T-cell (primary cell): ENCODE measurements at regions of chr2 and their contacts with region 1.

Region 1: DNA sequence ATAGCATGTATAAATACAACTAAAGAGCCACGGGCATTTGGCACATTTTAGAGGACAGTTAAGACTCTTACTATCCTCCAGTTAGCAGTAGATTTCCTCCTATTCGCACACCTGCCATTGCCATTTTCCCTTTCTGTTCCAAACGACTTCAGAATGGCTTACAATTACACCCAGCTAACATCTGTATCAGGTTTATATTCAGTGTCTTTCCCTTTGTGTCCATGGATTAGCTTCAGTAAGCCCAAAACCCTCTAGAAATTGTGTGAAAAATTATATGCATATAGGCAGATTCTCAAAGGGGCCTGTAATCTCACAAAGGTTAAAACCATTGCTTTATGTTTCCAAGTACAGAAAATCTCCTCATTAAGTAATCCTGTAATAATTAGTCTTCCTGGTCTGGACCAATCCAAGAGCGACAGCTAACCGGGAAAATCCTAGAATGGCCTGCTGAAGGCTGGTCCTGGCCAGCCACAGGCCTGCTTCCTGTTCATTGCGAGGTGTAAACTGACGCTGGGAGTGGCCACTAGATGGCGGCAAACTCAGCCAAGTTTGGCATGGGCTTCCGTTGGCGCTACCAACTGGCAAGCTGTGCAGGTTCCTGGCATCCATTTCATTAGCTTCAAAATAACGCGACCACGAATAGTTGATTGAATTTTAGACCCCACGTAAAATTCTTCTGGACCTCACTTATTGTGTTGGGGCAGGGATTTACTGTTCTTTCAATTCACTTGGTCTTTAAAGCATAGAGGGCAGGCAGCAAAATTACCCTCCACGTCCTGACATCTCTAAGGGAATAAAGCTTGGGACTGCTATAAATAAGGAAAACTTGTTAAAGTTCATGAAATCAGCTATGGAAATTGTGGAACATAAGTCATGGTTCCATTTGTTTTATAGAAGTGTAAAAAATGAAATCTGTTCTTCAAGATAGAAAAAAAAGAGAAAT is 17.1 kb downstream of the ARHGAP25 start:
- DNase-seq: peak; percentile 72 to 97 (median 89)
- ATAC-seq: peak; percentile 86 to 95 (median 88)
- H3K4me3 ChIP-seq: peak overlapping the region in 1 of 2 donors; percentile 20
- H3K4me3 Mint-ChIP-seq: peak overlapping the region; percentile 9 to 77 (median 43)
- H3K27ac ChIP-seq: peak overlapping the region; percentile 73
- H3K27ac Mint-ChIP-seq: peak overlapping the region; percentile 94 to 95
- H3K4me1 ChIP-seq: peaks cover 51 to 70% of the 10 kb centered on the region in 2 experiments
- H3K4me1 Mint-ChIP-seq: peaks cover 85 to 96% (median 94%) of the 10 kb centered on the region in 3 donors
- H3K27me3 ChIP-seq: no peaks in the 10 kb centered on the region
- H3K27me3 Mint-ChIP-seq: no peaks in the 10 kb centered on the region

Region 2: GRCh38 chr2:68467077-68467960 is 284.3 kb before region 1 on chr2 and contains the starts of genes APLF and FBXO48:
- CTCF ChIA-PET with region 1: interaction called, 6 to 31 read pairs
- POLR2A ChIA-PET with region 1: interaction called in 1 of 2 experiments, 10 read pairs
- DNase-seq: peak; percentile 94 to 100 (median 98)
- ATAC-seq: peak; percentile 91 to 94 (median 93)
- H3K4me3 ChIP-seq: peak within 1 kb of the TSS; percentile 96 to 97
- H3K4me3 Mint-ChIP-seq: peak within 1 kb of the TSS; percentile 96 to 98 (median 96)
- H3K27ac ChIP-seq: peak within 1 kb of the TSS; percentile 90
- H3K27ac Mint-ChIP-seq: peak within 1 kb of the TSS; percentile 94 to 95
- H3K4me1 ChIP-seq: peaks cover 17 to 23% of the 10 kb centered on the region in 2 experiments
- H3K4me1 Mint-ChIP-seq: peaks cover 37 to 53% (median 46%) of the 10 kb centered on the region in 3 donors
- H3K27me3 ChIP-seq: no peaks in the 10 kb centered on the region
- H3K27me3 Mint-ChIP-seq: no peaks in the 10 kb centered on the region
- total RNA-seq, gene APLF: 4.3 to 6.1 (median 5.1) TPM
- total RNA-seq, gene FBXO48: 1.8 to 4.5 (median 4.5) TPM

Region 3: GRCh38 chr2:68766376-68766845 is 14.7 kb after region 1 on chr2:
- CTCF ChIA-PET with region 1: interaction called, 4 to 49 read pairs
- POLR2A ChIA-PET with region 1: interaction called, 6 to 16 read pairs
- DNase-seq: peak; percentile 52 to 87 (median 73)
- ATAC-seq: peak; percentile 78 to 82 (median 80)
- H3K4me3 ChIP-seq: peak overlapping the region; percentile 35 to 38
- H3K4me3 Mint-ChIP-seq: peak overlapping the region; percentile 73 to 78 (median 76)
- H3K27ac ChIP-seq: peak overlapping the region; percentile 95
- H3K27ac Mint-ChIP-seq: peak overlapping the region; percentile 99
- H3K4me1 ChIP-seq: peaks cover 80 to 97% of the 10 kb centered on the region in 2 experiments
- H3K4me1 Mint-ChIP-seq: peaks cover 97 to 100% (median 98%) of the 10 kb centered on the region in 3 donors
- H3K27me3 ChIP-seq: no peaks in the 10 kb centered on the region
- H3K27me3 Mint-ChIP-seq: no peaks in the 10 kb centered on the region

Region 4: DNA sequence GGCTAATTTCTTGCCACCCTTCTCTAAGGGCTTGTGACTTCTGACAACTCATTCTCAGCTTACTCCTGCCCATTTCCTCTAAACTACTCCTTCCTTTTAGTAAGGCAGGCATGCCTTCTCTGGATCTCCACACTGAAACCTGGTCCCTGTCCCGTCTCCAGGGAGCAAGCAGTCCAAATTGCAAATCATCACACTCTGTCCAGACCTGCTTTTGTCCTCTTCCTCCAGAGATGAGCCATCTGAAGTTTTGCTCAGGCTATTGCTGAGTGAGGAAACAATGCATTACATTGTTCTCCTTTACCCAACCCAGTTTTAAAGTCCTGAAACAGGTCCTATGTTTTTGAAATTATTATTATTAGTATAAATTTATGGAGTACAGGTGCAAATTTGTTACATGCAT is 40.2 kb after region 1 on chr2:
- CTCF ChIA-PET with region 1: interaction called, 4 to 12 read pairs
- POLR2A ChIA-PET with region 1: no interaction called
- DNase-seq: no peak
- ATAC-seq: no peak
- H3K4me3 ChIP-seq: no peak overlapping the region
- H3K4me3 Mint-ChIP-seq: no peak overlapping the region
- H3K27ac ChIP-seq: peak overlapping the region; percentile 44
- H3K27ac Mint-ChIP-seq: peak overlapping the region; percentile 88 to 89
- H3K4me1 ChIP-seq: peaks cover 21 to 33% of the 10 kb centered on the region in 2 experiments
- H3K4me1 Mint-ChIP-seq: peaks cover 69 to 74% (median 73%) of the 10 kb centered on the region in 3 donors
- H3K27me3 ChIP-seq: no peaks in the 10 kb centered on the region
- H3K27me3 Mint-ChIP-seq: no peaks in the 10 kb centered on the region

Region 5: GRCh38 chr2:68837164-68837860 is 85.6 kb after region 1 on chr2:
- CTCF ChIA-PET with region 1: interaction called, 4 to 15 read pairs
- POLR2A ChIA-PET with region 1: no interaction called
- DNase-seq: peak in 34 of 35 experiments; percentile 30 to 81 (median 62)
- ATAC-seq: peak; percentile 62 to 85 (median 70)
- H3K4me3 ChIP-seq: no peak overlapping the region
- H3K4me3 Mint-ChIP-seq: no peak overlapping the region
- H3K27ac ChIP-seq: no peak overlapping the region
- H3K27ac Mint-ChIP-seq: peak overlapping the region; percentile 34 to 43
- H3K4me1 ChIP-seq: peaks cover 0 to 14% of the 10 kb centered on the region in 2 experiments
- H3K4me1 Mint-ChIP-seq: peaks cover 19 to 52% (median 30%) of the 10 kb centered on the region in 3 donors
- H3K27me3 ChIP-seq: no peaks in the 10 kb centered on the region
- H3K27me3 Mint-ChIP-seq: no peaks in the 10 kb centered on the region

Region 6: GRCh38 chr2:68925295-68925896 is 173.7 kb after region 1 on chr2:
- CTCF ChIA-PET with region 1: interaction called, 5 to 26 read pairs
- POLR2A ChIA-PET with region 1: no interaction called
- DNase-seq: peak in 30 of 35 experiments; percentile 21 to 83 (median 46)
- ATAC-seq: peak; percentile 68 to 83 (median 71)
- H3K4me3 ChIP-seq: no peak overlapping the region
- H3K4me3 Mint-ChIP-seq: no peak overlapping the region
- H3K27ac ChIP-seq: no peak overlapping the region
- H3K27ac Mint-ChIP-seq: no peak overlapping the region
- H3K4me1 ChIP-seq: no peaks in the 10 kb centered on the region
- H3K4me1 Mint-ChIP-seq: peaks cover 3 to 5% (median 4%) of the 10 kb centered on the region in 3 donors
- H3K27me3 ChIP-seq: peaks cover 0 to 11% of the 10 kb centered on the region in 2 experiments
- H3K27me3 Mint-ChIP-seq: peaks cover 3 to 4% of the 10 kb centered on the region in 2 donors